CD8-positive, alpha-beta T cell (primary cell): ENCODE measurements at regions of chr17 and their contacts with region 1.

Region 1: DNA sequence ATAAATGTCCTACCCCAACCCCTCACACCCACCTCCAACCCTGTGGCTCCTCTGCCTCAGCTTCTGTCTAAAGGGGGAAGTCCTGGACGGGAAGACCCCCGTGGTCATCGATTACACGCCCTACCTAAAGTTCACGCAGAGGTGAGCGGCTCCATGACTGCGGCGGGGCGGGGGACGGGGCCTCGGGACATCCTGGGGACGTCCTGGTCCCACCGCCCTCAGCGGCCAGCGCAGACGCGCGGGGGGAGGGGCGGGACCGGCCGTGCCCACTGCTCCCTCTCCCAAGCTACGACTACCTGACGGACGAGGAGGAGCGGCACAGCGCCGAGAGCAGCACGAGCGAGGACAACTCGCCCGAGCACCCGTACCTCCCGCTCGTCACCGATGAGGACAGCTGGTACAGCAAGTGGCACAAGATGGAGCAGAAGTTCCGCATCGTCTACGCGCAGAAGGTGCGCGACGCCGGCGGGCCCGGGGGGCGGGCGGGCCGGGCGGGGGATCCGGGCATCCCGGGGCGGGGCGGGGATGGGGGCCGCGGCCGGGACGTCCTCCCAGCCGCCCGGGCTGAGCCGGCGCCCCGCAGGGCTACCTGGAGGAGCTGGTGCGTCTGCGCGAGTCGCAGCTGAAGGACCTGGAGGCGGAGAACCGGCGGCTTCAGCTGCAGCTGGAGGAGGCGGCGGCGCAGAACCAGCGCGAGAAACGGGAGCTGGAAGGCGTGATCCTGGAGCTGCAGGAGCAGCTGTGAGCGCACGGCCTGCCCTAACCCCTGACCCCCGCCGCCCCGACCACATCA is 6.7 kb downstream of the RUNDC3A start:
- DNase-seq: peak in 4 of 9 experiments; percentile 26 to 51 (median 38)
- ATAC-seq: peak; percentile 69
- H3K4me3 ChIP-seq: peak overlapping the region; percentile 35 to 54
- H3K4me3 Mint-ChIP-seq: peak overlapping the region; percentile 75
- H3K27ac ChIP-seq: no peak overlapping the region
- H3K27ac Mint-ChIP-seq: no peak overlapping the region
- H3K4me1 ChIP-seq: peaks cover 19% of the 10 kb centered on the region
- H3K4me1 Mint-ChIP-seq: peaks cover 14% of the 10 kb centered on the region
- H3K27me3 ChIP-seq: peaks cover 22 to 23% of the 10 kb centered on the region in 2 experiments
- H3K27me3 Mint-ChIP-seq: peaks cover 37% of the 10 kb centered on the region
- CTCF ChIP-seq: no peak

Region 2: DNA sequence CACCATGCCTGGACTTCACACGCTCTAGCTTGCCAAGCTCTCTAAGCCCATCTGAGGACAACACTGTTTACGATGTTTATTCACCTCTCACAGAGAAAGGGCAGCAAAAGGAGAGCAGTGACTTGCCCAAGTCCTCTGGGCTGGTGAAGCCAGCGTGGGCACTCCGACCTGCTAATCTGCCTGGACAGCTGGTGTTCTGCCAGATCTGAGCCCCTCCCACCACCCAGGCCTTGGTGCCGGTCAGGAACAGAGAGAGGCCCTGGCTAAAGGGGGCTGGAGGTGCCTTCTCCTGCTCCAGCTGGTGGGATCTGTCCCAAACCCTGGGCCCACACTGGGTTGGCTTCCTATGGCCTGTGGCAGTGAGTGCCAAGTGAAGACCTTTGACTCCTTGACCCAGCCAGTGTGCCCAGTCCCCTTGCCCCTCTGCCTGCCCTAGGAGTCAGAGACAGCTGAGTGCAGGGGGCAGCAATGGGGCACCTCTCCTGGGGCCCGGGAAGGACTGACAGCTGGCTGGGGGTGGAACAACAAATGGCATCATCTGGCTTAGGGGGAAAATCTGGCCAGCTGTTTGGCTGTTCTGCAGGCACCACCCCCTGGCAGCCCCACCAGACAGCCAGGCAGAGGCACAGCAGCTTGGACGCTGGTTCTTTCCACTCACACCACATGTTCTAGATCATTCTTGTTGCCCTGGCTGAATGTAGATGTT is 45.4 kb before region 1 on chr17:
- CTCF ChIA-PET with region 1: no interaction called
- POLR2A ChIA-PET with region 1: no interaction called
- intact Hi-C with region 1: no loop called
- DNase-seq: no peak
- ATAC-seq: no peak
- H3K4me3 ChIP-seq: no peak overlapping the region
- H3K4me3 Mint-ChIP-seq: no peak overlapping the region
- H3K27ac ChIP-seq: no peak overlapping the region
- H3K27ac Mint-ChIP-seq: no peak overlapping the region
- H3K4me1 ChIP-seq: no peaks in the 10 kb centered on the region
- H3K4me1 Mint-ChIP-seq: no peaks in the 10 kb centered on the region
- H3K27me3 ChIP-seq: no peaks in the 10 kb centered on the region
- H3K27me3 Mint-ChIP-seq: peaks cover 3% of the 10 kb centered on the region
- CTCF ChIP-seq: no peak

Region 3: DNA sequence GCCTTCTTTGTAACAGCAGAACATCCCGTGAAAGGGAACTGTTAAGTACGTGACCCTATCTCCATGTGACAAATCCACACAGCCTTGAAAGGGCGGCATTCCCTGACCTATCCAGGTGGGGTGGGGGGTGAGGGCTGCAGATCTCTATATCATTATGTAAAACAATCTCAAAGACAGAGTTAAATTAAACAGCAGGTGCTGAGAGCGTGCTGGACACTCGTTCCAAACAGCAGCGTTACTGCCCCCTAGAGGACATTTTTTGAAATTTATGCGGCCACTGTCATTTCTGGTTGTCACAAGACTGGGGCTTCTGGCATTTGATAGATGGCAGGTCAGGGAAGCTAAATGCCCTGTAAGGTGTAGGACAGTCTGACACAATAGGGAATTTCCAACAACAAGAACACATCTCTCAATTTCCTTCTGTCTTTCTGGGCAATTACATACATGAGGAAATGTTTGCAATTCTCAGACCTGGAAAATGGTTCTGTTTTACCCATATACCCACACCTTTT is 16.2 kb after region 1 on chr17:
- CTCF ChIA-PET with region 1: interaction called, 51 read pairs
- POLR2A ChIA-PET with region 1: interaction called, 11 read pairs
- intact Hi-C with region 1: no loop called
- DNase-seq: peak; percentile 45 to 85 (median 75)
- ATAC-seq: no peak
- H3K4me3 ChIP-seq: no peak overlapping the region
- H3K4me3 Mint-ChIP-seq: no peak overlapping the region
- H3K27ac ChIP-seq: no peak overlapping the region
- H3K27ac Mint-ChIP-seq: no peak overlapping the region
- H3K4me1 ChIP-seq: peaks cover 4% of the 10 kb centered on the region
- H3K4me1 Mint-ChIP-seq: peaks cover 12% of the 10 kb centered on the region
- H3K27me3 ChIP-seq: no peaks in the 10 kb centered on the region
- H3K27me3 Mint-ChIP-seq: no peaks in the 10 kb centered on the region
- CTCF ChIP-seq: peak; percentile 89